Panc1 (cell line): ENCODE measurements at regions of chr9 and their contacts with region 1.

Region 1: GRCh38 chr9:126301985-126302603 is 24.5 kb upstream of the MVB12B start:
- DNase-seq: peak; percentile 18
- ATAC-seq: peak; percentile 87
- H3K4me3 ChIP-seq: no peak overlapping the region
- H3K27ac ChIP-seq: no peak overlapping the region
- H3K4me1 ChIP-seq: no peaks in the 10 kb centered on the region
- H3K27me3 ChIP-seq: no peaks in the 10 kb centered on the region
- CTCF ChIP-seq: peak; percentile 78

Region 2: DNA sequence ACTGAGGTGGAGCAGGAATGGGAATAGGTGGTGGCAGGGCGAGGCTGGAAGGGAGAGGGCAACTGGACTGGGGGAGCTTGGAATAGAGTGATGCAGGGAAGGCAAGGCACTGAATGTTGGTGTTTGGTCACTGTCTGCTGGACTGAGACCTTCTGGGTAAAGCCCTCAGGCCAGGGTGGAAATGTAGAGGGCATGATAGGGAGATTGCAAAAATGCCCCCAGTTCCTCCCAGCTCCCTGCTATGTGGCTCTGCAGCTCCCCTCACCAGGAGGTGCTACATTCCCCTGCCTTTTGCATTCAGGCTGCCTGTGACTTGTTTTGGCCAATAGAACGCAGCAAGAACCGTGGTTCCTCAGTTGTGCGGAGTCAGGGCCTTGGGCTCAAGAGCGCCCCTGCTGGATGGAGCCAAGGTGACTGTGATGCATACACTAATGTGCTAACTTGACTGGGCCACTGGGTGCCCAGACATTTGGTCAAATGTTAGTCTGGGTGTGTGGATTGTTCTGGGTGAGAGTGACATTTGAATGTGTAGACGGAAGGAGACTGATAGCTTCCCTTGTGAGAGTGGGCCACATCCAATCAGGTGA is 98.9 kb before region 1 on chr9:
- CTCF ChIA-PET with region 1: no interaction called
- POLR2A ChIA-PET with region 1: interaction called, 15 read pairs
- in situ Hi-C with region 1: no loop called
- intact Hi-C with region 1: no loop called
- DNase-seq: no peak
- ATAC-seq: no peak
- H3K4me3 ChIP-seq: no peak overlapping the region
- H3K27ac ChIP-seq: no peak overlapping the region
- H3K4me1 ChIP-seq: no peaks in the 10 kb centered on the region
- H3K27me3 ChIP-seq: no peaks in the 10 kb centered on the region
- CTCF ChIP-seq: peak; percentile 52

Region 3: GRCh38 chr9:126398403-126399058 is 96.4 kb after region 1 on chr9:
- CTCF ChIA-PET with region 1: no interaction called
- POLR2A ChIA-PET with region 1: no interaction called
- in situ Hi-C with region 1: no loop called
- intact Hi-C with region 1: loop called (anchors 1 kb)
- DNase-seq: peak; percentile 27
- ATAC-seq: peak; percentile 95
- H3K4me3 ChIP-seq: no peak overlapping the region
- H3K27ac ChIP-seq: no peak overlapping the region
- H3K4me1 ChIP-seq: no peaks in the 10 kb centered on the region
- H3K27me3 ChIP-seq: no peaks in the 10 kb centered on the region
- CTCF ChIP-seq: peak; percentile 94

Region 4: GRCh38 chr9:126490871-126491567 is 188.9 kb after region 1 on chr9:
- CTCF ChIA-PET with region 1: no interaction called
- POLR2A ChIA-PET with region 1: no interaction called
- in situ Hi-C with region 1: no loop called
- intact Hi-C with region 1: loop called (anchors 10 kb)
- DNase-seq: peak; percentile 35
- ATAC-seq: peak; percentile 74; the same call in 1 of the 2 replicates
- H3K4me3 ChIP-seq: no peak overlapping the region
- H3K27ac ChIP-seq: no peak overlapping the region
- H3K4me1 ChIP-seq: no peaks in the 10 kb centered on the region
- H3K27me3 ChIP-seq: no peaks in the 10 kb centered on the region
- CTCF ChIP-seq: peak; percentile 85